ENCODE measurements at regions of chrX and their contacts with region 1.

Region 1: DNA sequence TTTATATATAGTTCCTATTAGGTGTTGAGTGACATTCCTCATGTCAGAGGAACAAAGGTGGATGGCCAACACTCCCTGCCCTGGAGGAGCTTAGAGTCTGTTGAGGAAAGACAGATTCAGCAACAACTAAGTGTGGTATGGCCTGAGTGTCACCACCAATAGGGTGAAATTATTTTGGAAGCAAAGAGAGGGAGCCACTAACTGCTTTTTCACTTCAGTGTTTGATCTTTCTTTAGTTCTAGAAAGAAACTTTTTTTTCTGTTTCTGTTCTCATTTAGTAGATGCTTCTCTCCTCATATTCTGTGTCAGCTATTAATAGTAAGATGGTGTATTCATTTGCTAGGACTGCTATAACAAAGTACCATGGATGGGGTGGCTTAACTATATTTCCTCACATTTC is 81.5 kb downstream of the ARX start:
- DNase-seq: no peak
- ATAC-seq: no peak
- H3K4me3 ChIP-seq: no peak overlapping the region
- H3K27ac ChIP-seq: no peak overlapping the region
- H3K4me1 ChIP-seq: no peaks in the 10 kb centered on the region
- H3K27me3 ChIP-seq: no peaks in the 10 kb centered on the region
- CTCF ChIP-seq: no peak

Region 2: GRCh38 chrX:24963823-24964222 is 29.5 kb after region 1 on chrX:
- intact Hi-C with region 1: loop called in 1 of 2 experiments (anchors 1 kb)
- DNase-seq: no peak
- ATAC-seq: no peak
- H3K4me3 ChIP-seq: no peak overlapping the region
- H3K27ac ChIP-seq: no peak overlapping the region
- H3K4me1 ChIP-seq: no peaks in the 10 kb centered on the region
- H3K27me3 ChIP-seq: peaks cover 0 to 6% (median 0%) of the 10 kb centered on the region in 3 donors
- CTCF ChIP-seq: no peak